Colonic mucosa (tissue), 4 donors: ENCODE measurements at regions of chr18 and their contacts with region 1.

Region 1: DNA sequence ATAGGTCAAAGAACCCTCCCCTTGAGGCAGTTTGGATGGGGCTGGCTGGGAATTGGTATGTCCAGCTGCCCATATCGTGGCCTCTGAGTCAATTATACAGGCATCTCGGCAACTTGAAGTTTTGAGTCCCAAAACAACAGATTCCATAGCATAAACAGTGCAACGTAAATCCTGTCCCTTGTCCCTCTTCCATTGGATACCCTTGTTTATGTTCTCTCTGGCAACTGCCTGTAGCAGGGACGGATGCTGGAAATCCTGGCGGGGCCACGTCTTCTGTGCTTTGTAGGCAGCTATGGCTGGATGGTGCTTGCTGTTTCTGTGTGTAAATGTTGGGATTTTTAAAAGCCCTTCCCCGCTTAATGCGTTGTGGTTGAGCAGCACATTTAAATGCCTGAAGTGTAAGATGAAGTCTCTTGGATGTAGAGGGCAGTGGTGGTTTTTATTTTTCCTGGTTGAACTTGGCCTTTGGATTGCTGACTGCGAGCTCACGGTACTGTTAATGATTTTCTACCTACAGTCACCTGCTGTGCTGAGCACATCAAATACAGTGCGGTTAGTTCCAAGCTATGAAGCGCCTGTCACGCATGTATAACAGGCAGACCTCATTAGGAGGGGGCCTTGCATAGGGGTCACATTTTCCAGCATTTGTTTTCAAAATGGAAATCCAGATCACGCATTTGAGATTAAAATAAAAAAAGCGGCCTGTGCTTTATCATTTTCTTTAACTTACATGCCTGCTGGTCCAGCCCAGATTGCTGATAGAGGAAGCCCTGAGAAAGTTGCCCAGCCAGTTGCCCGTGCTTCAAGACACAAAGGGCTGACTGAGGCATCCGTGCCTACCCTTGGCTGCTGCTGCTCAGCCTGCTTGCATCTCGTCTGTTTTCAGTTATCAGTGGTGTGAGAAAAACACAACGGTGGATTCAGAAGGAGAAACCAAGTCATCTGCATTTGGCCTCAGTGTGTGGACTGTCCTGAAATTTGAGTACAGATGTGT is 84.7 kb downstream of the NEDD4L start:
- DNase-seq: peak; percentile 67
- H3K4me3 ChIP-seq: no peak overlapping the region
- H3K27ac ChIP-seq: peak overlapping the region; percentile 15
- H3K4me1 ChIP-seq: no peaks in the 10 kb centered on the region
- H3K27me3 ChIP-seq: no peaks in the 10 kb centered on the region
- CTCF ChIP-seq: no peak

Region 2: GRCh38 chr18:57881818-57882413 is 246.8 kb before region 1 on chr18:
- intact Hi-C with region 1: loop called (anchors 5 kb)
- DNase-seq: peak; percentile 68
- H3K4me3 ChIP-seq: no peak overlapping the region
- H3K27ac ChIP-seq: no peak overlapping the region
- H3K4me1 ChIP-seq: no peaks in the 10 kb centered on the region
- H3K27me3 ChIP-seq: no peaks in the 10 kb centered on the region
- CTCF ChIP-seq: peak; percentile 84

Region 3: GRCh38 chr18:57959278-57959677 is 169.4 kb before region 1 on chr18:
- intact Hi-C with region 1: loop called (anchors 10 kb)
- DNase-seq: peak; percentile 62
- H3K4me3 ChIP-seq: no peak overlapping the region
- H3K27ac ChIP-seq: no peak overlapping the region
- H3K4me1 ChIP-seq: peaks cover 4% of the 10 kb centered on the region
- H3K27me3 ChIP-seq: no peaks in the 10 kb centered on the region
- CTCF ChIP-seq: peak; percentile 26

Region 4: DNA sequence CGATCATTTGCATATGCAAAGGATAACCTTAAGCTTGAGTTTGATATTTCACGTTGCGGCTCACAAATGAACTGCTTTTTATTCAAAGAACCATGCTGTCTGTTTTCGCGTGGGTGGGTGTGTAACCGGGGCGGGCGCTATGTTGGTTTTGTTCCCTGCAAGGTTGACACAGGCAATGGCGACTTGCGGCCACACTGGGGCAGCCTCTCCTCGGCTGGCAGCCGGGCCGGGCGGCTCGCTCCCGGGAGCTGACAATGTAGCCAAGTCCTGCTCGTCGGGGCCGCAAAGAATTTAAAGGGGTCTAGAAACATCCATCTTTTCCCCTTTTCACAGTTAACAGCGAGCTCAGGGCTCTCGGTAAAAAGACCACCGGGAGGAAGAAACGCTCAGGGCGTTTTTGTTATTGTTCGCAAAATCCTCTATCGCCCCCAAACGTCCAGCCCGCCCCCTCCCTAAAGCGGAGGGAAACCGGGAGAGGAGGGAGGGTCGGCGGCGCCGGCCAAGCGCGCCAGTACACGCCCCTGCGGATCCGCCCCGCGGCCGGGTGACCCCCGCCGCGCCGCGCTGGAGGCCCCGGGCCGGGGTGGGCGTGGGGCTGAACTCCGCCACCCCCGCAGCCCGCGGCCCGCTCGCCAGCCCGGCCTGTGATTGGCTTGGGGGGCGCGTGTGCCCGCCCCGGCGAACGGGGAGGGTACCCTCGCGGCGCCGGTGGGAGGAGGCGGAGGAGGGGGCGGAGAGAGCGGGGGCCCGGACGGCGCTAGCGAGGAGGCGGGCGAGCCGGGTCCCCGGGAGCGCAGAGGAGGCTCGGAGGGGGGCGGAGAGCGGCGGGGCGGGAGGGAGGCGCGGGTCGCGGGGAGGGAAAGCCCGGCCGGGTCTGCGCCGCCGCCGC is 84.9 kb before region 1 on chr18 and contains the start of gene NEDD4L:
- intact Hi-C with region 1: loop called (anchors 5 kb)
- DNase-seq: peak; percentile 90
- H3K4me3 ChIP-seq: peak within 1 kb of the TSS; percentile 99
- H3K27ac ChIP-seq: peak within 1 kb of the TSS; percentile 88
- H3K4me1 ChIP-seq: peaks cover 6% of the 10 kb centered on the region
- H3K27me3 ChIP-seq: no peaks in the 10 kb centered on the region
- CTCF ChIP-seq: peak; percentile 89
- total RNA-seq, gene NEDD4L: 149 to 212 TPM